Panc1 (cell line): ENCODE measurements at regions of chr19 and their contacts with region 1.

Region 1: GRCh38 chr19:38496603-38497487 is 63.4 kb downstream of the RYR1 start:
- DNase-seq: no peak
- ATAC-seq: no peak
- H3K4me3 ChIP-seq: no peak overlapping the region
- H3K27ac ChIP-seq: no peak overlapping the region
- H3K4me1 ChIP-seq: no peaks in the 10 kb centered on the region
- H3K27me3 ChIP-seq: no peaks in the 10 kb centered on the region
- CTCF ChIP-seq: no peak

Region 2: GRCh38 chr19:38464421-38465082 is 32.3 kb before region 1 on chr19:
- CTCF ChIA-PET with region 1: no interaction called
- POLR2A ChIA-PET with region 1: interaction called, 11 read pairs
- in situ Hi-C with region 1: no loop called
- intact Hi-C with region 1: no loop called
- DNase-seq: no peak
- ATAC-seq: no peak
- H3K4me3 ChIP-seq: no peak overlapping the region
- H3K27ac ChIP-seq: no peak overlapping the region
- H3K4me1 ChIP-seq: no peaks in the 10 kb centered on the region
- H3K27me3 ChIP-seq: no peaks in the 10 kb centered on the region
- CTCF ChIP-seq: no peak